CD4-positive, alpha-beta memory T cell (primary cell): ENCODE measurements at regions of chr1 and their contacts with region 1.

Region 1: DNA sequence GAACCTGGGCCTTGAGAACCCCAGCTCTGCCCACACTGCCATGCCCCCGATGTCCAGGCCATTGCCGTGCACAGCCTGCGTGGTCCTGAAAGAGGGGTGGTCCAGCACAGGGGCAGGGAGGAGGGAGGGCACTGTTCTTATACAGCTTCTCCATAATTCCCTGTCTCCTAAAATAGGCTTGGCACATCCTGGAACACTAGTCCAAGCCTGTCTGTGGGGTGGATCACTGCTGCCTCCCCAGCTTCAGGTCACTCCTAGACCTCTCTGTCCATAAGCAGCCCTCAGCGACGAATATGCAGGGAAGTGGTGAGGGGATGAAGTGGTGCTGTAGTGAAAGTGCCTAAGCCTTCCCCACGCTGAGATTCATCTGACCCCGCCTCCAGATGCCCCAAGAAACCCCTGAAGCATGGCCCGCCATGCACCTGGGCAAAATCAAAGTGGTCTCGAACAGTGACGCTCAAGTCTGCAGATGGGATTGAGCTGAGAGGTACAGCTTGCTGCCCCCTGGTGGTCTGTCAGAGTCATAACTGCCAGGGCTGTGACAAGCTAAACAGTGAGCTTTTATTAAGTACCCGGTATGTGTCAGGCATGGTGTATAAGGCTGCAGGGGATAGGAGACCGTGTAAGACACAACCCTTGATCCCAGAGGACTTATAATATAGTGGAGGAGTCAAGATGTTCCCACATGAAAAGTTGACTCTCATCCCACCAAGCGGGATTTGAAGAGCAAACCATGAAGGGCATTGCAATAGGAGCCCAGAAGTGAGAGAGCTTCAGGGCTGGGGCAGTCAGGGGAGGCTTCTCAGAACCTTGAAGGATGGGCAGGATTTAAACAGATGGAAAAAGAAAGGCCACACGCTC is 66.6 kb downstream of the FAM163A start:
- DNase-seq: peak; percentile 70 to 74 (median 71)
- H3K4me3 ChIP-seq: no peak overlapping the region
- H3K4me3 Mint-ChIP-seq: peak overlapping the region in 1 of 8 donors; percentile 46
- H3K27ac ChIP-seq: no peak overlapping the region
- H3K27ac Mint-ChIP-seq: peak overlapping the region in 6 of 7 donors; percentile 0 to 48 (median 5)
- H3K4me1 ChIP-seq: peaks cover 14% of the 10 kb centered on the region
- H3K4me1 Mint-ChIP-seq: peaks cover 8 to 12% (median 11%) of the 10 kb centered on the region in 4 donors
- H3K27me3 ChIP-seq: no peaks in the 10 kb centered on the region
- H3K27me3 Mint-ChIP-seq: peaks cover 0 to 3% of the 10 kb centered on the region in 2 donors

Region 2: GRCh38 chr1:178532392-178532791 is 1277.3 kb before region 1 on chr1:
- CTCF ChIA-PET with region 1: no interaction called
- POLR2A ChIA-PET with region 1: no interaction called
- intact Hi-C with region 1: loop called (anchors 10 kb)
- DNase-seq: peak; percentile 56 to 64 (median 60)
- H3K4me3 ChIP-seq: no peak overlapping the region
- H3K4me3 Mint-ChIP-seq: peak overlapping the region in 1 of 8 donors; percentile 16
- H3K27ac ChIP-seq: no peak overlapping the region
- H3K27ac Mint-ChIP-seq: peak overlapping the region in 3 of 7 donors; percentile 18 to 53 (median 43)
- H3K4me1 ChIP-seq: peaks cover 6% of the 10 kb centered on the region
- H3K4me1 Mint-ChIP-seq: peaks cover 0 to 6% (median 3%) of the 10 kb centered on the region in 4 donors
- H3K27me3 ChIP-seq: no peaks in the 10 kb centered on the region
- H3K27me3 Mint-ChIP-seq: peaks cover 0 to 1% of the 10 kb centered on the region in 2 donors

Region 3: GRCh38 chr1:179365320-179366092 is 444.2 kb before region 1 on chr1 and contains the start of gene AXDND1:
- CTCF ChIA-PET with region 1: interaction called, 4 read pairs
- POLR2A ChIA-PET with region 1: no interaction called
- intact Hi-C with region 1: loop called (anchors 5 kb)
- DNase-seq: peak; percentile 93 to 96 (median 94)
- H3K4me3 ChIP-seq: peak within 1 kb of the TSS; percentile 71 to 76
- H3K4me3 Mint-ChIP-seq: peak within 1 kb of the TSS; percentile 92 to 99 (median 98)
- H3K27ac ChIP-seq: peak within 1 kb of the TSS; percentile 99
- H3K27ac Mint-ChIP-seq: peak within 1 kb of the TSS; percentile 100
- H3K4me1 ChIP-seq: peaks cover 10% of the 10 kb centered on the region
- H3K4me1 Mint-ChIP-seq: peaks cover 5 to 22% (median 10%) of the 10 kb centered on the region in 4 donors
- H3K27me3 ChIP-seq: no peaks in the 10 kb centered on the region
- H3K27me3 Mint-ChIP-seq: no peaks in the 10 kb centered on the region
- total RNA-seq, gene AXDND1: 0.44 to 1.3 TPM

Region 4: DNA sequence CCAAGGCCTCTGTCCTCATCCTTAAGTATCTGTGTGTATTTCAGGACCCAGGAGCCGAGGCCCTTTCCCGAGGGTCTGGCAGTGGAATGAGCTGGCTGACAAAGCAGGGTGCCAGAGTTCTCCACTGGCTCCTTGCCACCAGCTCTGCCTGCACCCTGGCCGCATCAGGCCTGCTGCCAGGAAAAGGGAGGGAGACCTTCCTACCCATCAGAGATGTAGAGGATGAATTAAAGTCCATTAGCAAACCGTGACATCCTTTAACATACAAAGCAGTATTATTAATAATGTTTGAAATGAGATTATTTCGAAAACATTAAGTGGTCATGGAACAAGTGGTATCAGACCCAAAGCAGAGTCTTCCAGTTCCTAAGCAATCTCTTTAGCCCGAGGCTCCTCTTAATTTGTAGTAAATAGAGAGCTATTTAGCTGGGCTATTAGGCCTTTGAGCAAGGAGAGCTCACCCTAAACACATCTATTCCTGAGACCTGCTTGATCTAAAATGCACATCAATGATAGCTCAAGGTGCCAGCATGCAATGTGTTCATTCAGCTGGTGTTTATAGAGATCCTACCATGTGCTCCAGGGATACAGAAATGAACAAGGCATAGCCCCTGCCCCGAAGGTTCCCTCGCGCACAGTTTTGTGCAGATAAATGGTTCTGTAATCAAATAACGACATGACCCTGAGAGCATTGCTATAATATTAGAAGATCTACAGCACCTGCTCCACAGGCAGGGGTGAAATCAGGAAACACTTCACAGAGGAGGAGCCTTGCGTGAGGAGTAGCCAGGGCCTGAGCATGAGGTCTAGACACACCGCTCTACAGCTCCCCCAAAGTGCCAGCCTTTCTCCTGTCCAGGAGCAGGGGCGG is 22.7 kb before region 1 on chr1:
- CTCF ChIA-PET with region 1: interaction called, 148 read pairs
- POLR2A ChIA-PET with region 1: no interaction called
- intact Hi-C with region 1: no loop called
- DNase-seq: no peak
- H3K4me3 ChIP-seq: no peak overlapping the region
- H3K4me3 Mint-ChIP-seq: no peak overlapping the region
- H3K27ac ChIP-seq: no peak overlapping the region
- H3K27ac Mint-ChIP-seq: no peak overlapping the region
- H3K4me1 ChIP-seq: no peaks in the 10 kb centered on the region
- H3K4me1 Mint-ChIP-seq: no peaks in the 10 kb centered on the region
- H3K27me3 ChIP-seq: no peaks in the 10 kb centered on the region
- H3K27me3 Mint-ChIP-seq: peaks cover 1 to 5% of the 10 kb centered on the region in 2 donors

Region 5: DNA sequence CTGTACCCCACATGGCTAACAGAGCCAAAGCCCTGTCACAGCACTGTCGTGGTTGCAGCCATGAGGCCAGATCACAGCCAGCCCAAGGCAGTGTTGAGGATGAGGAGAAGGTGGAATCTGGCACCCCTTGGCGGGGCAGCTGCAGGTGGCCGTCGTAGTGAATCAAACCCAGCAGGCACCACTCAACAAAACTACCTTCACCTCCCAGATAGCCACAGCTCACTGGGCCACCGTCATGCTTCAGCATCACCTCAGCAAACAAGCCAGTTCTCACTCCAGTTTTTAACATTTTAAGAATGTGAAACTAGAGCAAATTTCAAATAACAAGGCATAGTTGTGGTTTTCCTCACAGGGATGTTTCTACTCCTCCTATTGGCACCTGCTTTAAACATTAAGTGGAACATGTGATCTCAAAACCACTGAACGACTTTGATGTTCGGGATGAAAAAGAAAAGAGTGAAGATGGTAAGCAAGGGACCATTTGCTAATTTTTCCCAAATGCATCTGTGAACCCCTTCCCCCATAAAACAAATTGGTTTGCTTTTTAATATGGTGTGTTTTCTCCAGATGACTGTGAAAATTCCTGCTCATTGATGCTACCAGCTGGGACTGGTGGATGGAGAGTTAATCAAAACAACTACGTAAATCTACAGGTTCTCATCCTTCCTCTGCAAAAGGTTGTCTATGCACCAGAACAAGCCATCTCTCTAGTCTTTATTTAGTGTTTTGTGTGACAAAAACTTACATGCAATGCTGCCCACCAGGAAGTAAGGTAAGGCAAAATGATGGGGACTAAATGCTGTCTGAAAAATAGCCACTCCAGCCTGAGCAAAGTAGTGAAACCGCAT is 22.3 kb after region 1 on chr1:
- CTCF ChIA-PET with region 1: interaction called, 59 read pairs
- POLR2A ChIA-PET with region 1: interaction called, 22 read pairs
- intact Hi-C with region 1: loop called (anchors 1 kb)
- DNase-seq: peak in 4 of 5 donors; percentile 53 to 66 (median 63)
- H3K4me3 ChIP-seq: peak overlapping the region in 1 of 2 donors; percentile 13
- H3K4me3 Mint-ChIP-seq: peak overlapping the region; percentile 50 to 81 (median 76)
- H3K27ac ChIP-seq: peak overlapping the region; percentile 29
- H3K27ac Mint-ChIP-seq: peak overlapping the region; percentile 61 to 94 (median 87)
- H3K4me1 ChIP-seq: peaks cover 22% of the 10 kb centered on the region
- H3K4me1 Mint-ChIP-seq: peaks cover 21 to 38% (median 25%) of the 10 kb centered on the region in 4 donors
- H3K27me3 ChIP-seq: no peaks in the 10 kb centered on the region
- H3K27me3 Mint-ChIP-seq: no peaks in the 10 kb centered on the region

Region 6: GRCh38 chr1:179882243-179883039 is 72.7 kb after region 1 on chr1 and contains the start of gene TOR1AIP1:
- CTCF ChIA-PET with region 1: interaction called, 17 read pairs
- POLR2A ChIA-PET with region 1: interaction called, 36 read pairs
- intact Hi-C with region 1: loop called (anchors 1 kb)
- DNase-seq: peak; percentile 98 to 99 (median 98)
- H3K4me3 ChIP-seq: peak within 1 kb of the TSS; percentile 80 to 94
- H3K4me3 Mint-ChIP-seq: peak within 1 kb of the TSS; percentile 94 to 99 (median 96)
- H3K27ac ChIP-seq: peak within 1 kb of the TSS; percentile 99
- H3K27ac Mint-ChIP-seq: peak within 1 kb of the TSS; percentile 99 to 100 (median 100)
- H3K4me1 ChIP-seq: peaks cover 53% of the 10 kb centered on the region
- H3K4me1 Mint-ChIP-seq: peaks cover 31 to 77% (median 53%) of the 10 kb centered on the region in 4 donors
- H3K27me3 ChIP-seq: no peaks in the 10 kb centered on the region
- H3K27me3 Mint-ChIP-seq: no peaks in the 10 kb centered on the region
- total RNA-seq, gene TOR1AIP1: 53.8 to 61.0 TPM

Region 7: GRCh38 chr1:179926494-179927205 is 116.9 kb after region 1 on chr1:
- CTCF ChIA-PET with region 1: no interaction called
- POLR2A ChIA-PET with region 1: no interaction called
- intact Hi-C with region 1: no loop called
- DNase-seq: no peak
- H3K4me3 ChIP-seq: no peak overlapping the region
- H3K4me3 Mint-ChIP-seq: no peak overlapping the region
- H3K27ac ChIP-seq: no peak overlapping the region
- H3K27ac Mint-ChIP-seq: no peak overlapping the region
- H3K4me1 ChIP-seq: no peaks in the 10 kb centered on the region
- H3K4me1 Mint-ChIP-seq: no peaks in the 10 kb centered on the region
- H3K27me3 ChIP-seq: no peaks in the 10 kb centered on the region
- H3K27me3 Mint-ChIP-seq: no peaks in the 10 kb centered on the region

Region 8: GRCh38 chr1:180563026-180563827 is 753.5 kb after region 1 on chr1:
- CTCF ChIA-PET with region 1: no interaction called
- POLR2A ChIA-PET with region 1: no interaction called
- intact Hi-C with region 1: no loop called
- DNase-seq: no peak
- H3K4me3 ChIP-seq: no peak overlapping the region
- H3K4me3 Mint-ChIP-seq: no peak overlapping the region
- H3K27ac ChIP-seq: no peak overlapping the region
- H3K27ac Mint-ChIP-seq: no peak overlapping the region
- H3K4me1 ChIP-seq: no peaks in the 10 kb centered on the region
- H3K4me1 Mint-ChIP-seq: no peaks in the 10 kb centered on the region
- H3K27me3 ChIP-seq: no peaks in the 10 kb centered on the region
- H3K27me3 Mint-ChIP-seq: peaks cover 4 to 12% of the 10 kb centered on the region in 2 donors